IMR-90 (cell line): ENCODE measurements at regions of chr9 and their contacts with region 1.

Region 1: DNA sequence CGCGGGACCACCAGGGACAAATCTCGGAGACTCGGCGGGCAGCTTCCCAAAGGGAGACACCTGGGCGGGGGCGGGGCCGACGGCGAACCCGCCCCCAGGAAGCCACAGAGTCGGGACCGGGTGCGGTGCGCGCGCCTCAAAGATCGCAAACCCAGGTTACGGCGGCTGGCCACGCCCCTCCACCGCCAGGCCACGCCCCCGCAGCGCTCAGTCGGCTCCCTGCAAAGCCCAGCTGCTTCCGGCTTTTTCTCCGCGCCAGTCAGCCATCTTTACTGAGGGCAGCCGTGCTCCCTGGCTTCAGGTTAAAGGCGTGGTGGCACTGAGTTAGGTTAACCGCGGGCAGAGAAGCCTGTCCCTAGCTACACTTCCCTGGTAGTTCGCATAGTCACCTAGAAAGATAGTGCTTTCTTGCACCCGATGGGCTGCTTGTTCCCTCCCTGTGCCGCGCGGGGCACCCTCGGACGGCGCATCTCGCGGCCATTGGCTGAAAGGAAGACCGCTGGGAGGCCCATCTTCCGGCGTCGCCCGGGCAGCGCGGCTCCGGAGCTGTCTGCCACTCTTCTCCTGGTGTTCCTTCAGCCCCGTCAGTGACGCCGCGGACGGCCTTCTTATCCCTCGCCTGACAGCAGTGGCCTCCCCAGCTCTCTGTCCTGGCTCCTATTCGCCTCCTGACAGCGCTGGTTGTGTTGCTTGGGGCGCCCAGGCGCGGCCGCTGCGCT is at the start of gene TBC1D2:
- DNase-seq: peak; percentile 90
- ATAC-seq: peak; percentile 93
- H3K4me3 ChIP-seq: peak within 1 kb of the TSS; percentile 72
- H3K27ac ChIP-seq: peak within 1 kb of the TSS; percentile 97
- H3K4me1 ChIP-seq: peaks cover 19% of the 10 kb centered on the region
- H3K27me3 ChIP-seq: no peaks in the 10 kb centered on the region
- CTCF ChIP-seq: no peak
- POLR2A ChIP-seq: no peak
- RAD21 ChIP-seq: no peak
- total RNA-seq, gene TBC1D2: 35.6 and 36.9 TPM in 2 replicates

Region 2: GRCh38 chr9:98168941-98169488 is 86.7 kb before region 1 on chr9:
- CTCF ChIA-PET with region 1: no interaction called
- POLR2A ChIA-PET with region 1: no interaction called
- dilution Hi-C with region 1: no loop called
- in situ Hi-C with region 1: no loop called
- intact Hi-C with region 1: no loop called
- DNase-seq: peak; percentile 68
- ATAC-seq: peak; percentile 87
- H3K4me3 ChIP-seq: no peak overlapping the region
- H3K27ac ChIP-seq: no peak overlapping the region; the same call in 1 of the 2 replicates
- H3K4me1 ChIP-seq: peaks cover 8% of the 10 kb centered on the region; the same call in 1 of the 2 replicates
- H3K27me3 ChIP-seq: peaks cover 2% of the 10 kb centered on the region; the same call in 1 of the 2 replicates
- CTCF ChIP-seq: no peak
- POLR2A ChIP-seq: no peak
- RAD21 ChIP-seq: no peak

Region 3: DNA sequence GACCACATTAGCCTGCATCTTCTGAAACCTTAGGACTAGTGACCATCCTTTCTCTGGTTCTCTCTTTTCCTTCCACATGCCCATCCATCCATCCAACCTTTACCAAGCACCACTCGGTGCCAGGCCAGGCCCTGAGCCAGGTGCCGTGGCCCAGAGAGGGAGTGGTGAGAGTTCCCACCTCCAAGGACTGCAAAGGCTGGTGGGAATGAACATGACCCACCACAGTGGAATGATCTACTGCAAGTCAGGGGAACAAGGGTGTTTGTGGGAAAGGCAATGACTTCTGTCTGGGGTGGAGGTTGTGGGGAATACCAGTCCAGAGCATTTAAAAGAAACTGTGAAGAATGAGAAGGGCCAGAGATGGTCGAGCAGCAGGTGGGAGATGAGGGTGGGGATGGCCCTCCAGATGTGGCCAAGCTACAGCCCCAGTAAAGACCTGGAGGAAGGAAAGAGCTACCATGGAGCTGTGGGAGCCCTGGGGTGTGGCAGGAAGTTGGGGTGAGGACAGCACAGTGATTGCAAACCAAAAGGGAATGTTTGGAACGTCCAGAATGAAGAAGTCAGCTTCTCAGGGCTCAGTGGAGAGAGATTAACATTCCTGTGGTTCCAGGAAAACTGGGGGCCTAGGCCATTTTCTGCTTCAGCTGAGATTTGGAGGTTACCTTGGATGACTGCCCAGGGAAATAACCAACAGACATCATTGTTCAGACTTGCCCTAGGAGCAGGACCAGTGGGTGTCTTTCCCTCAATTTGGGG is 32.7 kb before region 1 on chr9:
- CTCF ChIA-PET with region 1: no interaction called
- POLR2A ChIA-PET with region 1: interaction called, 10 read pairs
- dilution Hi-C with region 1: no loop called
- in situ Hi-C with region 1: no loop called
- intact Hi-C with region 1: loop called (anchors 2 kb)
- DNase-seq: peak; percentile 99
- ATAC-seq: peak; percentile 94
- H3K4me3 ChIP-seq: no peak overlapping the region
- H3K27ac ChIP-seq: peak overlapping the region; percentile 98
- H3K4me1 ChIP-seq: peaks cover 37% of the 10 kb centered on the region
- H3K27me3 ChIP-seq: no peaks in the 10 kb centered on the region
- CTCF ChIP-seq: no peak
- POLR2A ChIP-seq: no peak
- RAD21 ChIP-seq: no peak